ENCODE measurements at regions of chr1 and their contacts with region 1.

Region 1: DNA sequence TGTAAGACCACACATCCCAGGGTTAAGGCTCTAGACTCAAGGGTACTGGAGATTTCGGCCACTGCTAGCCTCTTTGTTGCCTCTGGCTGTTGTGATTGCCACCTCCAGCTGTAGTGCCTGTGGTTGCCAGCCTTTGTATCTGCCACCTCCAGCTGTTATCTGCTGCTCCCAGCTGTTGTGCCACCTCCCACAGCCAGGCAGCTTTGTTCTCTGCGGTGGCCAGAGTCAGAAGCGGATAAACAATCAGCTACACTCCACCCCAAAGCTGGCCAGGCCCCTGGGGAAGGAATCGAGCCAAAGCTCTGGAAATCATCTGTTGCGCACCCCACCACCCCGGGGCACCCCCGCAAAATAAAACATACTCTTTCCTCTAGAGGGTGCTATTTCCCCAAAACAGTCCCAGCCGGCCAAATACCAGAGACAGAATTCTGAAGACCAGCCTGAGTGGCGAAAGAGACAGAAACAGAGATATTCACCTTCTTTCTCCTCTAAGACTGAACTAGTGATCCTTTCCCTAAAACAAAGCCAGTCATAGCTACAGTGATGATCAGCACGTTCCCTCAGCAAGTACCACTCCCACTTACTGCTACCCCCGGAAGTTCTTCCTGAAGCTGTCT is 14.8 kb upstream of the PIGM start:
- DNase-seq: peak; percentile 26 to 75
- ATAC-seq: peak; percentile 73 to 91
- H3K4me3 ChIP-seq: 0 out of 3 replicates have a peak overlapping the region, but pooled peaks have one; percentile 17
- H3K27ac ChIP-seq: no peak overlapping the region
- H3K4me1 ChIP-seq: peaks cover 8% of the 10 kb centered on the region; the same call in 2 of the 3 replicates
- CTCF ChIP-seq: peak; percentile 72
- EP300 ChIP-seq: no peak
- POLR2A ChIP-seq: no peak
- RAD21 ChIP-seq: peak; percentile 67 to 71

Region 2: GRCh38 chr1:160031365-160032164 is 15.0 kb before region 1 on chr1 and contains the start of gene PIGM:
- CTCF ChIA-PET with region 1: interaction called, 37 read pairs
- POLR2A ChIA-PET with region 1: interaction called, 3 read pairs
- DNase-seq: peak; percentile 91 to 96
- ATAC-seq: peak; percentile 96 to 98
- H3K4me3 ChIP-seq: peak within 1 kb of the TSS; percentile 95
- H3K27ac ChIP-seq: peak within 1 kb of the TSS; percentile 83 to 84
- H3K4me1 ChIP-seq: peaks cover 12% of the 10 kb centered on the region
- CTCF ChIP-seq: no peak
- EP300 ChIP-seq: no peak
- POLR2A ChIP-seq: peak; percentile 48
- RAD21 ChIP-seq: no peak
- polyA plus RNA-seq, gene PIGM: 6.3 and 7.2 TPM in 2 replicates

Region 3: GRCh38 chr1:160058087-160058486 is 11.5 kb after region 1 on chr1:
- CTCF ChIA-PET with region 1: interaction called, 37 read pairs
- POLR2A ChIA-PET with region 1: no interaction called
- DNase-seq: no peak
- ATAC-seq: peak in 1 of 2 experiments; percentile 65; a peak in 3 of 6 replicates
- H3K4me3 ChIP-seq: no peak overlapping the region
- H3K27ac ChIP-seq: no peak overlapping the region
- H3K4me1 ChIP-seq: peaks cover 7% of the 10 kb centered on the region; the same call in 2 of the 3 replicates
- CTCF ChIP-seq: peak; percentile 23; the same call in 1 of the 3 replicates
- EP300 ChIP-seq: no peak
- POLR2A ChIP-seq: no peak
- RAD21 ChIP-seq: no peak; a peak in 1 of 5 replicates

Region 4: GRCh38 chr1:160070243-160071163 is 23.9 kb after region 1 on chr1:
- CTCF ChIA-PET with region 1: interaction called, 409 read pairs
- POLR2A ChIA-PET with region 1: no interaction called
- DNase-seq: peak; percentile 36 to 67
- ATAC-seq: peak; percentile 79 to 97
- H3K4me3 ChIP-seq: peak overlapping the region; percentile 48
- H3K27ac ChIP-seq: no peak overlapping the region; a peak in 1 of 6 replicates
- H3K4me1 ChIP-seq: no peaks in the 10 kb centered on the region
- CTCF ChIP-seq: no peak
- EP300 ChIP-seq: no peak
- POLR2A ChIP-seq: no peak
- RAD21 ChIP-seq: no peak